GM12878 (cell line): ENCODE measurements at regions of chr2 and their contacts with region 1.

Region 1: GRCh38 chr2:217510771-217511291 is 492.0 kb downstream of the TNS1 start:
- DNase-seq: peak; percentile 27
- ATAC-seq: peak; percentile 87
- H3K4me3 ChIP-seq: no peak overlapping the region
- H3K27ac ChIP-seq: no peak overlapping the region
- H3K4me1 ChIP-seq: no peaks in the 10 kb centered on the region
- H3K27me3 ChIP-seq: no peaks in the 10 kb centered on the region
- CTCF ChIP-seq: peak; percentile 68 to 79 (median 78); a peak in 5 of 6 replicates
- EP300 ChIP-seq: no peak
- POLR2A ChIP-seq: no peak
- RAD21 ChIP-seq: peak; percentile 97

Region 2: GRCh38 chr2:216535454-216535995 is 975.3 kb before region 1 on chr2:
- CTCF ChIA-PET with region 1: no interaction called
- POLR2A ChIA-PET with region 1: no interaction called
- RAD21 ChIA-PET with region 1: no interaction called
- SMC1A ChIA-PET with region 1: no interaction called
- in situ Hi-C with region 1: loop called (anchors 10 kb)
- intact Hi-C with region 1: no loop called
- DNase-seq: no peak
- ATAC-seq: no peak
- H3K4me3 ChIP-seq: no peak overlapping the region
- H3K27ac ChIP-seq: no peak overlapping the region
- H3K4me1 ChIP-seq: peaks cover 13% of the 10 kb centered on the region
- H3K27me3 ChIP-seq: no peaks in the 10 kb centered on the region
- CTCF ChIP-seq: no peak
- EP300 ChIP-seq: no peak
- POLR2A ChIP-seq: no peak
- RAD21 ChIP-seq: no peak

Region 3: DNA sequence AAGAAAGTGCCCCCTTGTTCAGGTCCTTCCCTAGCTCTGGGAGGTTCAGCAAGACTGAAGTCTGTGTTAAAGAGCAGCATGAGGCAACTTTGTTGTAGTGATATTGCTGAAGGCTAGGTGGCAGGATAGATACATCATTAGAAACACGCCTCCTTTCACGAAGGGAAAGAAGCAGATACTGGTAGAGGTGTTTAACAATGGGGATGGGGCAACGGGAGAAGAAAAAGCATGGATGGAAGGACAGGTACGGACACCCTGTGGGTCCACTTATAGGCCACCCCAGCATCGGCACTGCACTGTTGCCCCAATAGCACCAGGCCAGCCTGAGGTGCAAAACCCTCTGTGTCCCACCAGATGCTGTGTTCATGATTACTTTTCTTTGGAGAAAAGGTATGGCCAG is 811.9 kb before region 1 on chr2:
- CTCF ChIA-PET with region 1: interaction called, 26 read pairs
- POLR2A ChIA-PET with region 1: no interaction called
- RAD21 ChIA-PET with region 1: interaction called, 3 read pairs
- SMC1A ChIA-PET with region 1: interaction called, 9 read pairs
- in situ Hi-C with region 1: no loop called
- intact Hi-C with region 1: loop called (anchors 1 kb)
- DNase-seq: no peak
- ATAC-seq: peak; percentile 88
- H3K4me3 ChIP-seq: no peak overlapping the region
- H3K27ac ChIP-seq: no peak overlapping the region
- H3K4me1 ChIP-seq: no peaks in the 10 kb centered on the region
- H3K27me3 ChIP-seq: peaks cover 2 to 12% of the 10 kb centered on the region in 2 experiments; a peak in 3 of 4 replicates
- CTCF ChIP-seq: peak; percentile 60 to 78 (median 66); a peak in 5 of 6 replicates
- EP300 ChIP-seq: no peak
- POLR2A ChIP-seq: no peak
- RAD21 ChIP-seq: peak; percentile 75

Region 4: DNA sequence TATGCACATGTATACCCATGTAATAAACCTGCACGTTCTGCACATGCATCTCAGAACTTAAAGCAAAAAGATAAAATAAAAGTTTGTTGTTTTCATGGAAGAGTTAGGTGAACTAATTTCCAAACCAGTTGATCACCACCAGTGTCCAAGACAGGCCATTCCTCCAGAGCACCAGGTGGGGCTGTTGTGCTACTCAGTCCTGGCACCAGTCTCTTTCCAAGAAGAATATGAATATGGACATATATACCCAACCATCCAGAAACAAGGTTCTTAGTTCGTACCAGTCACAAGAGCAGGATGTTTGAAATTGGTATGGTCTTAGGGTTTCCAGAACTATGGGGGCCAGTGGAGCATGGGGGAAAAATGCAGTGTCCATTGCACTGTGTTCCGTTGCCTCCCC is 633.7 kb before region 1 on chr2:
- CTCF ChIA-PET with region 1: no interaction called
- POLR2A ChIA-PET with region 1: no interaction called
- RAD21 ChIA-PET with region 1: no interaction called
- SMC1A ChIA-PET with region 1: no interaction called
- in situ Hi-C with region 1: no loop called
- intact Hi-C with region 1: loop called (anchors 5 kb)
- DNase-seq: no peak
- ATAC-seq: no peak
- H3K4me3 ChIP-seq: no peak overlapping the region
- H3K27ac ChIP-seq: no peak overlapping the region
- H3K4me1 ChIP-seq: no peaks in the 10 kb centered on the region
- H3K27me3 ChIP-seq: no peaks in the 10 kb centered on the region
- CTCF ChIP-seq: peak in 2 of 3 experiments; percentile 20 to 40; a peak in 3 of 6 replicates
- EP300 ChIP-seq: no peak
- POLR2A ChIP-seq: no peak
- RAD21 ChIP-seq: 0 out of 2 replicates have a peak, but pooled peaks have one; percentile 32

Region 5: DNA sequence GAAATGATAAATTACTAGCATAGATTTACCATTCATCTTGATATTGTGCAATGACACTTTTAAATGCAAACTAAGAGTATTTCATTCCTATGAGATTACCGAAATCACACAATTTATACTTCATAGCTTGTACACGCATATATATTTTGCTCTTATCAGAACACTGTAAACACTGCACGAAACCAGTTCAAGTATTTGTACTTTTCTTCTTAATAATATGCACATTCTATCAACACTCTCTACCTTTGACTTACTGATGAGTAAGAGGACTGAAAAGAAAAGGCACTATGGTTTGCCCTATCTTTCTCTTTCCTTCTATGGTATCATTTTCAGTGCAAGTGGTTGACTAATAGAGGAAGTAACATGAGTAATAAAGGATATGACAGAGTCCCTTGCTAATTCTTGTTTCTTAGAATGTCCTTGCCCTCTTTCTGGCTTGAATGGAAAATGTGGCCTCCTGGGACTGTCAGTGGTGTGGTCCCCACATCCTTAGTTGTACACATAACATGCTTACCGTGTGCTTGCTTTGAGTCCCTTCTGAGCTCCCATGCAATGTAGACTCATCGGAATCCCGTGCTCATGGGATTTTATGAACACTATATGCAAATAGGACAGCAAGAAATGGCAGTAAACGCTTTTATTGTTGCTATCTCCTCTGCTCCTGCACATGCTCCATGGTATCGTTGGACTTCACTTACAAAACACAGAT is 287.5 kb before region 1 on chr2:
- CTCF ChIA-PET with region 1: no interaction called
- POLR2A ChIA-PET with region 1: no interaction called
- RAD21 ChIA-PET with region 1: no interaction called
- SMC1A ChIA-PET with region 1: no interaction called
- in situ Hi-C with region 1: no loop called
- intact Hi-C with region 1: loop called (anchors 1 kb)
- DNase-seq: peak; percentile 93
- ATAC-seq: peak; percentile 81
- H3K4me3 ChIP-seq: 0 out of 2 replicates have a peak overlapping the region, but pooled peaks have one; percentile 23
- H3K27ac ChIP-seq: peak overlapping the region; percentile 92
- H3K4me1 ChIP-seq: peaks cover 52% of the 10 kb centered on the region
- H3K27me3 ChIP-seq: no peaks in the 10 kb centered on the region
- CTCF ChIP-seq: no peak
- EP300 ChIP-seq: peak; percentile 90 to 96
- POLR2A ChIP-seq: no peak
- RAD21 ChIP-seq: 0 out of 2 replicates have a peak, but pooled peaks have one; percentile 19